Endothelial cell of umbilical vein (primary cell): ENCODE measurements at regions of chr1 and their contacts with region 1.

Region 1: DNA sequence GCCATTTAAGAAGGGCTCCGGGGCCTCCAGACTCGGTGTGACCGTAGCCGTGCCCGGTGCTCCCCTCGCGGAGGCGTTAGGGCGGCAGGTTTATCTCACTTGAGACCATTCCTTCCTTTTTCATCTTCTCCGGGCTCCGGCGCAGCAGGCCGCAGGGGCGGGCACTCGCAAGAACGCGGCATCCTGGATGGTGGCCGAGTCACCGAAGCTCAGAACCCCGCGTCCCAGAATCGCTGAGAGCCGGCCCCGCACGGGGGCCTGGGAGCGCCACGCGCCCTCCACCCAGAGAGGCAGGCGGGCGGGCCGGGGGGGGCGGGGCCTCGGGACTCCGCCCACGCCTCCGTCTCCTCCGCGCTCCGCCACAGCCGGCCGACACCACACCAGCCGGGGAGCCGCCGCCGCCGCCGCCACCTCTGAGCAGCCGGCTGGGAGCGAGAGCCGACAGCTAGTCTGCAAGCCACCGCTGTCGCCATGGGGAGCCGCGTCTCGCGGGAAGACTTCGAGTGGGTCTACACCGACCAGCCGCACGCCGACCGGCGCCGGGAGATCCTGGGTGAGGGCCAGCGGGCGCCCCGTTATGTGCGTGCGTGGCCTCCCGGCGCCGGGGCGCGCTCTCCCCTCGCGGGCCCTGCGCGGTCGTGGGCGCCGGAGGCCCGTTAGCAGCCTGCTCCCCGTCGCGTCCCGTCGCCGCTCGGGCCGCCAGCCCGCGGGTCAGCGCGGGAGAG is at the start of gene DEGS1:
- DNase-seq: peak; percentile 86
- H3K4me3 ChIP-seq: peak within 1 kb of the TSS; percentile 57 to 91 (median 68)
- H3K27ac ChIP-seq: peak within 1 kb of the TSS; percentile 70
- H3K4me1 ChIP-seq: peaks cover 5% of the 10 kb centered on the region
- H3K27me3 ChIP-seq: no peaks in the 10 kb centered on the region
- CTCF ChIP-seq: no peak
- POLR2A ChIP-seq: peak; percentile 81
- total RNA-seq, gene DEGS1: 85.8 and 87.0 TPM in 2 replicates

Region 2: GRCh38 chr1:224168859-224169380 is 14.1 kb before region 1 on chr1:
- CTCF ChIA-PET with region 1: interaction called, 13 read pairs
- POLR2A ChIA-PET with region 1: interaction called, 4 read pairs
- dilution Hi-C with region 1: no loop called
- intact Hi-C with region 1: no loop called
- DNase-seq: peak; percentile 94
- H3K4me3 ChIP-seq: peak overlapping the region in 1 of 3 experiments; percentile 27
- H3K27ac ChIP-seq: peak overlapping the region; percentile 45
- H3K4me1 ChIP-seq: peaks cover 15% of the 10 kb centered on the region
- H3K27me3 ChIP-seq: peaks cover 0 to 3% of the 10 kb centered on the region in 2 experiments
- CTCF ChIP-seq: no peak
- POLR2A ChIP-seq: no peak

Region 3: GRCh38 chr1:224203243-224204016 is 20.4 kb after region 1 on chr1:
- CTCF ChIA-PET with region 1: no interaction called
- POLR2A ChIA-PET with region 1: no interaction called
- dilution Hi-C with region 1: no loop called
- intact Hi-C with region 1: loop called (anchors 2 kb)
- DNase-seq: no peak
- H3K4me3 ChIP-seq: no peak overlapping the region
- H3K27ac ChIP-seq: no peak overlapping the region
- H3K4me1 ChIP-seq: peaks cover 16% of the 10 kb centered on the region
- H3K27me3 ChIP-seq: no peaks in the 10 kb centered on the region
- CTCF ChIP-seq: no peak
- POLR2A ChIP-seq: no peak

Region 4: DNA sequence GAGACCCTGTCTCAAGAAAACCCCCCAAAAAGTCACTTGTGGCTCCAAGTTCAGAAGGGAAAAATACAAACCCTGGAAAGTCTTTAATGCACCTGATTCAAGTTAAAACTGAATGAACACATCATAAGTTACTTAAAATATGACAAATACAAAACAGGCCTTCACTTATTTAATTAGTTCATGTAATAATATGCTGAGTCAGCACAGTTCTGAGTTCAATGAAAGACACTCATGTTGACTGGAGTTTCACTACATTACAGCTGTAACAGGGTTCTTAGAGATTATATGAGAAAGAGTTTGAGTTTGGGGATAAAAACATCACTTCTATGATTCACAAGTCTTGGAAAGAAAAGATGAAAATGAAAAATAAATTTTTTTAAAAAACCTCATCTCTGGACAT is 51.0 kb after region 1 on chr1:
- CTCF ChIA-PET with region 1: no interaction called
- POLR2A ChIA-PET with region 1: no interaction called
- dilution Hi-C with region 1: no loop called
- intact Hi-C with region 1: no loop called
- DNase-seq: no peak
- H3K4me3 ChIP-seq: no peak overlapping the region
- H3K27ac ChIP-seq: no peak overlapping the region
- H3K4me1 ChIP-seq: no peaks in the 10 kb centered on the region
- H3K27me3 ChIP-seq: no peaks in the 10 kb centered on the region
- CTCF ChIP-seq: no peak
- POLR2A ChIP-seq: no peak

Region 5: DNA sequence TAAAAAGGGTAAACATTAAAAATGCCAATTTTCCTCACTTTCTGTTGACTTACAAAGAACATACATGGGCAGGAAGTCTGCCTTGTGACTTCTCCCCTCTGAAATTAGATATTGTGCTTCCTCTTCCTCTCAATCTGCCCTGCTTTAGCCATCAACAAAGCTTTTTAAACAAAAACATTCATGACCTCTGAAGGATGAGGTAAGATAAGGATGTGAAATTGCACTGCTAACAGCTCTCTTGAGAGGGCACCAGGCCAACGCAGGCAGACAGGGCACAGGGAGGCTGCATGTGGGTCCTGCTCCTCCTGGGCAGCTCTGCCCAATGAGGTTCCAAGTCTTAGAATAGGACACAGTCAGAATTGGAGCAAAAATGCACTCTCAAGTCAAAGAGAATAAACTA is 62.2 kb after region 1 on chr1:
- CTCF ChIA-PET with region 1: no interaction called
- POLR2A ChIA-PET with region 1: no interaction called
- dilution Hi-C with region 1: no loop called
- intact Hi-C with region 1: loop called (anchors 1 kb)
- DNase-seq: peak; percentile 99
- H3K4me3 ChIP-seq: no peak overlapping the region
- H3K27ac ChIP-seq: peak overlapping the region; percentile 57
- H3K4me1 ChIP-seq: peaks cover 15% of the 10 kb centered on the region
- H3K27me3 ChIP-seq: no peaks in the 10 kb centered on the region
- CTCF ChIP-seq: no peak
- POLR2A ChIP-seq: peak; percentile 81

Region 6: DNA sequence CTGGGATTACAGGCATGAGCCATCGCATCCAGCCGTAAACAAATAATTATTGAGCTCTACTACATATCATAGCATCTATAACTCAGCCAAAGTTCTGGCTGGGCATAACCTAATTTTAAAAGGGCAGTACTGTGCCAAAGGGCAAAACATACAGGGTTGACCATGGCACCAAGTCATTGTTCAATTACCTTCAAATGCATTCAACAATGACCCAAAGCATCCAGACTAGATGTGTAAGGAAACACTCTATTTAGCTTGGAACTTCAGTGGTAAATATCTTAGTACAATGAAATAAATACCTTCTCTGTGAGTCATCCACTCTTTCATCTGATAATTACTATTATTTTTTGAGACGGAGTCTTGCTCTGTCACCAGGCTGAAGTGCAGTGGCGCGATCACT is 76.9 kb after region 1 on chr1:
- CTCF ChIA-PET with region 1: interaction called, 3 read pairs
- POLR2A ChIA-PET with region 1: interaction called, 5 read pairs
- dilution Hi-C with region 1: no loop called
- intact Hi-C with region 1: loop called (anchors 2 kb)
- DNase-seq: peak; percentile 72
- H3K4me3 ChIP-seq: no peak overlapping the region
- H3K27ac ChIP-seq: peak overlapping the region; percentile 58
- H3K4me1 ChIP-seq: peaks cover 32% of the 10 kb centered on the region
- H3K27me3 ChIP-seq: no peaks in the 10 kb centered on the region
- CTCF ChIP-seq: no peak
- POLR2A ChIP-seq: peak; percentile 29

Region 7: GRCh38 chr1:224435318-224435763 is 252.3 kb after region 1 on chr1:
- CTCF ChIA-PET with region 1: no interaction called
- POLR2A ChIA-PET with region 1: no interaction called
- dilution Hi-C with region 1: no loop called
- intact Hi-C with region 1: no loop called
- DNase-seq: peak; percentile 42
- H3K4me3 ChIP-seq: peak overlapping the region in 2 of 3 experiments; percentile 45 to 100
- H3K27ac ChIP-seq: peak overlapping the region; percentile 55
- H3K4me1 ChIP-seq: peaks cover 30% of the 10 kb centered on the region
- H3K27me3 ChIP-seq: no peaks in the 10 kb centered on the region
- CTCF ChIP-seq: no peak
- POLR2A ChIP-seq: no peak